ENCODE measurements at regions of chr14 and their contacts with region 1.

Region 1: DNA sequence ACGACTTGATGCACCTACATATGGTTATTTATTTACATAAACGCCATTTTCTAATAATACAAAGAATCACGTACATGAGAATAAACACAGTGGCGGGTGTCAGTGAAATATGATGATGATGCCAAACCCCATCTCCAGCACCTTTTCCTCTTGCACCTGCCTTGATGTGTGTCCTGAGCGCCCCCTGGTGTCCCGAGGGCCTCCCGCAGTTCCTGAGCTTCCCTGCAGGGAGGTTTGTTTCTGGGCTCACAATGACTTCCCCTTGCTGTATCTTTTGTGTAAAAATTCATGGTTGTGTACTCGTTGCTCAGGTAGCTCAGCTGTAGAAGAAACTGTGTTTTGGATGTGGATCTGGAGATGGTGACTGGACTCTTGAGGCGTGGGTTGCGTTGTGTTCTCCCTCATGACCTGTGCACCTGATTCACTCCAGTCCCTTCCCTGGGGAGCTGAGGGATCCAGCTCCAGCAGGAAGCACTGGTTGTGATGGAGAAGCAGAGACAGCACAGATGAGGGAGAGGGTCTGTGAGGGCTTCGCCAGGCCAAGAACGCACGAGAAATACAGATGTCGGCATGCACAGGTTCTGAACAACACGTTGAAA is 1037.8 kb downstream of the TMEM121 start:
- DNase-seq: peak; percentile 76
- H3K4me3 Mint-ChIP-seq: no peak overlapping the region
- H3K27ac Mint-ChIP-seq: no peak overlapping the region
- H3K4me1 Mint-ChIP-seq: no peaks in the 10 kb centered on the region
- H3K27me3 Mint-ChIP-seq: peaks cover 27% of the 10 kb centered on the region

Region 2: GRCh38 chr14:106343626-106344025 is 220.5 kb before region 1 on chr14:
- CTCF ChIA-PET with region 1: no interaction called
- POLR2A ChIA-PET with region 1: no interaction called
- intact Hi-C with region 1: no loop called
- DNase-seq: no peak
- H3K4me3 Mint-ChIP-seq: no peak overlapping the region
- H3K27ac Mint-ChIP-seq: no peak overlapping the region
- H3K4me1 Mint-ChIP-seq: no peaks in the 10 kb centered on the region
- H3K27me3 Mint-ChIP-seq: no peaks in the 10 kb centered on the region

Region 3: DNA sequence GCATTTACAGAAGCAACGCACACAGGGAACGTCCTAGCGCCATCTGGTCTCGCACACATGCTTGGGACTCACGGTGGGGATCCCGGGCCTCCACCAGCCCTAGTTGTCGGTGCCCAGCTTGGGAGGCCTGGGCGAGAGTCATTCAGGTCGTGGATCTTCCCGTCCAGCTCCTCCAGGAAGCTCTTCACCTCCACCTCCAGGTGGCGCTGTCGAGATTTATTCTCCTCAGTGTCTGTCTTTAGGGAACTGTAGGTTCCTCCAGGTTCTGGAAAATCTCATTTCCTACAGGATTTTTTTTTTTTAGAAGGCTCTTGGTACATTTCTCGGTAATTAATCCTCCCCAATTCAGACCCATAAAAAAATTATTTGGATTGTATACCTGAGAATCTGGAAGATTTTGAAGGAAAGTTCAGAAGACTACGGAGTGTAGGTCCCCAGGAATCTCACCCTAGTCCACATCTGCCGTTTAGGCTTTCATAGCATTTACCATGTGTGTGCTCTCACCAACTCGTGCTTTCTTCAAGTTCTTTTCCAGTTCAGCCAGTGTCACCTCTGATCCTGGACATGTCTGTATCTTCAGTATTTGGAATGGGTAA is 127.7 kb before region 1 on chr14:
- CTCF ChIA-PET with region 1: interaction called, 14 read pairs
- POLR2A ChIA-PET with region 1: no interaction called
- intact Hi-C with region 1: no loop called
- DNase-seq: peak; percentile 65
- H3K4me3 Mint-ChIP-seq: no peak overlapping the region
- H3K27ac Mint-ChIP-seq: no peak overlapping the region
- H3K4me1 Mint-ChIP-seq: no peaks in the 10 kb centered on the region
- H3K27me3 Mint-ChIP-seq: peaks cover 30% of the 10 kb centered on the region

Region 4: DNA sequence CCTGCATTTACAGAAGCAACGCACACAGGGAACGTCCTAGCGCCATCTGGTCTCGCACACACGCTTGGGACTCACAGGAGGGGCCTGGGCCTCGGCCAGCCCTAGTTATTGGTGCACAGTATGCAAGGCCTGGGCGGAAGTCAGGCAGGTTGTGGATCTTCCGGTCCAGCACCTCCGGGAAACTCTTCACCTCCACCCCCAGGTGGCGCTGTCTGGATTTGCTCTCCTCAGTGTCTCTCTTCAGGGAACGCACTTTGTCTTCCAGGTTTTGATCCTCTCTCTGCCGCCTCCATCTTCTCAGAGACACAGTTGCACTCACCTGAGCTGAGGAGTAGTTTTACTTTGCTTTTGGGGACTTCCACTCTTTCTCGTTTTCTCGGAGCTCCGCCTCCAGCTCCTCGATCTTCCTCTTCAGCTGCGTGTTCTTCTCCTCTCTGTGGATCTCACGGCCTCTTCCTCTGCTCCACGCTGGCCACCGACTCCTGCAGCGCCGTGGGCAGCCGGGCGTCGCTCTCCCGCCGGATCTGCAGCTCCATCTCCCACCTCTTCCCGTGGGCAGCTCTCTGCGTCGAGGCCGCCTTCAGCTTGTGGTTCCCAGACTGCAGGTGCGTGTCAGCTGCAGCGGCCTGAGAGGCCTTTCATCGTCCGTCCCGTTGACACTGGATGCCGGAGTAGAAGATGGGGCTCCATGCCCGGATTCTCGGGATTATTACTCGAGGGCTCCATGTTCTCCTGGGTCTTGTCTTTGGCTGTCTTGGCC is 104.0 kb before region 1 on chr14:
- CTCF ChIA-PET with region 1: interaction called, 14 read pairs
- POLR2A ChIA-PET with region 1: no interaction called
- intact Hi-C with region 1: no loop called
- DNase-seq: peak; percentile 82
- H3K4me3 Mint-ChIP-seq: no peak overlapping the region
- H3K27ac Mint-ChIP-seq: peak overlapping the region; percentile 18
- H3K4me1 Mint-ChIP-seq: peaks cover 5% of the 10 kb centered on the region
- H3K27me3 Mint-ChIP-seq: peaks cover 12% of the 10 kb centered on the region

Region 5: GRCh38 chr14:106511006-106511799 is 53.0 kb before region 1 on chr14:
- CTCF ChIA-PET with region 1: interaction called, 12 read pairs
- POLR2A ChIA-PET with region 1: no interaction called
- intact Hi-C with region 1: no loop called
- DNase-seq: peak; percentile 70
- H3K4me3 Mint-ChIP-seq: no peak overlapping the region
- H3K27ac Mint-ChIP-seq: peak overlapping the region; percentile 29
- H3K4me1 Mint-ChIP-seq: peaks cover 72% of the 10 kb centered on the region
- H3K27me3 Mint-ChIP-seq: no peaks in the 10 kb centered on the region

Region 6: DNA sequence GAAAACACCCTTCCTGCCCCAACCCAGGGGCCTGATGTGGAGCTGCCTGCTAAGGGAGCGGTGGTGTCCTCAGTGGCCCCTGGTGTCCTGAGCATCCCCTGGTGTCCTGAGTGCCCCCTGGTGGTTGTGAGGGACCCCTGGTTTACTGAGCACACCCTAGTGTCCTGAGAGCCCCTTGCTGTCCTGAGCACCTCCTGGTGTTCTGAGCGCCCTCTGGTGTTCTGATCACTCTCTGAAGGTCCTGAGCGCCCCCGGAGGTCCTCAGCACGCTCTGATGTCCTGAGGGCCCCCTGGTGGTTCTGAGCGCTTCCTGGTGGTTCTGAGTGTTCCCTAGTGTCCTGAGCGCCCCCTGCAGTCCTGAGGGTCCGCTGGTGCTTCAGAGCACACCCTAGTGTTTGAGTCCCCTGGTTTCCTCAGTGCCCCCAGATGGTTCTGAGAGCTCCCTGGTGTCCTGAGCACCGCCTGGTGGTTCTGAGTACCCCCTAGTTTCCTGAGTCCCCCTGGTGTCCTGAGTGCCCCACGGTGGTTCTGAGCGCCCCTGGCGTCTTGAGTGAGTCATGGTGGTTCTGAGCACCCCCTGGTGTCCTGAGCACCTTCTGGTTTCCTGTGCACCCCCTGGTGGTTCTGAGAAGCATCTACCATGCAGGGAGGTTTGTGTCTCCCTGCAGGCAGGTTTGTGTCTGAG is 33.6 kb before region 1 on chr14:
- CTCF ChIA-PET with region 1: interaction called, 47 read pairs
- POLR2A ChIA-PET with region 1: no interaction called
- intact Hi-C with region 1: no loop called
- DNase-seq: peak; percentile 55
- H3K4me3 Mint-ChIP-seq: no peak overlapping the region
- H3K27ac Mint-ChIP-seq: no peak overlapping the region
- H3K4me1 Mint-ChIP-seq: no peaks in the 10 kb centered on the region
- H3K27me3 Mint-ChIP-seq: peaks cover 27% of the 10 kb centered on the region

Region 7: DNA sequence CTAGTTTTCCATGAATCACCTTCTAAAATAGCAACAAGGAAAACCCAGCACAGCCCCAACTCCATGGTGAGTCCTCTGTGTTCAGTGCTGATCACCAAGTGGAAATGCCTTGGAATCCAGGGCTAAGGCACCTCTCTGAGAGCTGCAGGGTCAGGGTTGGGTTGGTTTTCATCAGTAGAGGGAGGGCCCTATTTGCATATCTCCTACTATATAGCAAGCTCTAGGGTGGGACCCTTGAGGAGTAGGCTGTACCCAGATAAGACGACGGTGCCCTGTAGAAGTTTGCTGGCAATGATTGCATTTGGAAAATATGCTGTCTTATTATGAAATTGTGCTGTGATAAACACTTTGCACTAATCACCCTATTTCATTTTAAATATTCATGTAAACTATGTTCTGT is 26.0 kb before region 1 on chr14:
- CTCF ChIA-PET with region 1: interaction called, 47 read pairs
- POLR2A ChIA-PET with region 1: no interaction called
- intact Hi-C with region 1: no loop called
- DNase-seq: no peak
- H3K4me3 Mint-ChIP-seq: no peak overlapping the region
- H3K27ac Mint-ChIP-seq: no peak overlapping the region
- H3K4me1 Mint-ChIP-seq: no peaks in the 10 kb centered on the region
- H3K27me3 Mint-ChIP-seq: peaks cover 21% of the 10 kb centered on the region

Region 8: GRCh38 chr14:106605548-106606448 is 41.6 kb after region 1 on chr14:
- CTCF ChIA-PET with region 1: interaction called, 13 read pairs
- POLR2A ChIA-PET with region 1: no interaction called
- intact Hi-C with region 1: no loop called
- DNase-seq: peak; percentile 89
- H3K4me3 Mint-ChIP-seq: no peak overlapping the region
- H3K27ac Mint-ChIP-seq: no peak overlapping the region
- H3K4me1 Mint-ChIP-seq: peaks cover 4% of the 10 kb centered on the region
- H3K27me3 Mint-ChIP-seq: peaks cover 52% of the 10 kb centered on the region

Measured in activated CD4-positive, alpha-beta memory T cell treated with anti-CD3 and anti-CD28 coated beads for 36 hours (primary cell).